CD14-positive monocyte (primary cell): ENCODE measurements at regions of chr5 and their contacts with region 1.

Region 1: GRCh38 chr5:178130604-178131485 is at the start of gene RMND5B:
- DNase-seq: peak; percentile 67 to 78 (median 76)
- H3K4me3 ChIP-seq: peak within 1 kb of the TSS; percentile 88 to 97 (median 92)
- H3K4me3 Mint-ChIP-seq: peak within 1 kb of the TSS; percentile 89 to 94
- H3K27ac ChIP-seq: peak within 1 kb of the TSS; percentile 16 to 67
- H3K27ac Mint-ChIP-seq: peak within 1 kb of the TSS in 5 of 7 donors; percentile 41 to 60 (median 54)
- H3K4me1 ChIP-seq: peaks cover 13 to 20% of the 10 kb centered on the region in 2 donors
- H3K4me1 Mint-ChIP-seq: peaks cover 21% of the 10 kb centered on the region
- H3K27me3 ChIP-seq: peaks cover 0 to 5% of the 10 kb centered on the region in 2 donors
- H3K27me3 Mint-ChIP-seq: peaks cover 6 to 28% (median 13%) of the 10 kb centered on the region in 3 donors
- CTCF ChIP-seq: no peak
- polyA plus RNA-seq, gene RMND5B: 20.9 to 27.4 (median 23.9) TPM

Region 2: DNA sequence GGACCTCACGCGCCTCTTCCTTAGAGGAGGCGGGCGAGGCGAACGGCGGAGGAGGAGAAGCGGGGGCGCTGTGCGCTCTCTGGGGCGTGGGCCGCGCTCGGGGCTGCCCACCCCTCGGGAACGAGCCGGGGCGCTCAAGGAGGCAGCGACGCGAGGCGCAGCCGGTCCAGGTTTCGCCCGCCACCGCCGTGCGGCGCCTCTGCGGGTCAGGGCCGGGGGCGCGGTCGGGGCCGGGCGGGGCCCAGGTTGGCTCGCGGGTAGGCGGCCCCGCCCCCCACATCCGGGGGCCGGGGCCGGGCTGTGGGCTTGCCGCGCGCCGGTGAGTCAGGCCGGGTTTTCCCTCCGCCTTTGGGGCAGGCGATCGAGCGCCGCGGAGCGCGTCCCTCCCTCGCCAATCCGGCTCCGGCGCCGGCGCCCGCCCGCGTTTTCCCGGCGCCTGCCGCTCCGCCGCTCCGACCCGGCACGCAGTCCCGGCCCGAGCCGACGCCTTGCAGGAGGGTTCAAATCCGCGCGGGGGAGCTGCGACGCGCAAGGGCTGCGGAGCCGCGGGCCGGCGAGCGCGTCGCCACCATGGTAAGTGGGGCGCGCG is 17.6 kb before region 1 on chr5 and contains the start of gene N4BP3:
- intact Hi-C with region 1: no loop called
- DNase-seq: peak; percentile 35 to 69 (median 41)
- H3K4me3 ChIP-seq: peak within 1 kb of the TSS in 1 of 3 experiments; percentile 42
- H3K4me3 Mint-ChIP-seq: peak within 1 kb of the TSS; percentile 61 to 86
- H3K27ac ChIP-seq: no peak within 1 kb of the TSS
- H3K27ac Mint-ChIP-seq: peak within 1 kb of the TSS in 3 of 7 donors; percentile 6 to 55 (median 45)
- H3K4me1 ChIP-seq: peaks cover 14 to 29% of the 10 kb centered on the region in 2 donors
- H3K4me1 Mint-ChIP-seq: peaks cover 32% of the 10 kb centered on the region
- H3K27me3 ChIP-seq: peaks cover 48 to 83% of the 10 kb centered on the region in 2 donors
- H3K27me3 Mint-ChIP-seq: peaks cover 72 to 88% (median 77%) of the 10 kb centered on the region in 3 donors
- CTCF ChIP-seq: no peak
- polyA plus RNA-seq, gene N4BP3: 0.01 TPM in 1 of 3 donors, not detected in the others

Region 3: DNA sequence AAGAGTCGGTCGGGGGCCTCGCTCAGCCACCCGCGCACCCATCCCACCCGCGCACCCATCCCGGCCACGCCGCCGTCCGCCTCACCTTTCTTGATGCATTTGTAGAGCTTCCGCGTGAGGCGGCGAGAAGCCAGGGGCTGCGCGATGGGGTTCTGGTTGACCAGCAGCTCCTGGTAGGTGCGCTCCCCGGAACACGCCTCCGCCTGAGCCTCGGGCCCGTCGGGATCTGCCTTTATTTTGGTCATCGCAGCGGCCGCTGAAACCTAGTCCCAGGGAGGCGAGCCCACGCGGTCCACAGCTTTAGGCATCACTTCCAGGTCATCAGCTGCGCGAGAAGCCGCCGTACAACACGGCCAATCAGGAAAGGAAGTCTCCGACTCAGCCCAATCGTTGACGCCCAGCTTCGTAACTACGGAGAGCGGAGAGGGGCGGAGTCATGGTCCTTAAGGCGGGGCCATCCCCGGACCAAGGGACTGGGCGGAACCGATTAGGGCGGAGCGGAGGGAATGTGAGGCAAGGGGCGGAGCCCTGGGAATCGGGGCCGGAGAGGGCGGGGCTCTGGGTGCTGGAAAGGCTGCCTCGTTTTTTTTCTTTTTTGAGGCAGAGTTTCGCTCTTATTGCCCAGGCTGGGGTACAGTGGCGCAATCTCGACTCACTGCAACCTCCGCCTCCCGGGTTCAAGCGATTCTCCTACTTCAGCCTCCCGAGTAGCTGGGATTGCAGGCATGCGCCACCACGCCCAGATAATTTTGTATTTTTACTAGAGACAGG is 22.9 kb after region 1 on chr5 and contains the start of gene NHP2:
- intact Hi-C with region 1: loop called in 1 of 2 experiments (anchors 2 kb)
- DNase-seq: peak; percentile 98 to 99 (median 99)
- H3K4me3 ChIP-seq: peak within 1 kb of the TSS; percentile 40 to 79 (median 64)
- H3K4me3 Mint-ChIP-seq: peak within 1 kb of the TSS; percentile 86 to 92
- H3K27ac ChIP-seq: peak within 1 kb of the TSS; percentile 33 to 77
- H3K27ac Mint-ChIP-seq: peak within 1 kb of the TSS; percentile 65 to 91 (median 89)
- H3K4me1 ChIP-seq: peaks cover 9 to 17% of the 10 kb centered on the region in 2 donors
- H3K4me1 Mint-ChIP-seq: peaks cover 17% of the 10 kb centered on the region
- H3K27me3 ChIP-seq: no peaks in the 10 kb centered on the region
- H3K27me3 Mint-ChIP-seq: no peaks in the 10 kb centered on the region
- CTCF ChIP-seq: no peak
- polyA plus RNA-seq, gene NHP2: 68.9 to 139 (median 108) TPM

Region 4: DNA sequence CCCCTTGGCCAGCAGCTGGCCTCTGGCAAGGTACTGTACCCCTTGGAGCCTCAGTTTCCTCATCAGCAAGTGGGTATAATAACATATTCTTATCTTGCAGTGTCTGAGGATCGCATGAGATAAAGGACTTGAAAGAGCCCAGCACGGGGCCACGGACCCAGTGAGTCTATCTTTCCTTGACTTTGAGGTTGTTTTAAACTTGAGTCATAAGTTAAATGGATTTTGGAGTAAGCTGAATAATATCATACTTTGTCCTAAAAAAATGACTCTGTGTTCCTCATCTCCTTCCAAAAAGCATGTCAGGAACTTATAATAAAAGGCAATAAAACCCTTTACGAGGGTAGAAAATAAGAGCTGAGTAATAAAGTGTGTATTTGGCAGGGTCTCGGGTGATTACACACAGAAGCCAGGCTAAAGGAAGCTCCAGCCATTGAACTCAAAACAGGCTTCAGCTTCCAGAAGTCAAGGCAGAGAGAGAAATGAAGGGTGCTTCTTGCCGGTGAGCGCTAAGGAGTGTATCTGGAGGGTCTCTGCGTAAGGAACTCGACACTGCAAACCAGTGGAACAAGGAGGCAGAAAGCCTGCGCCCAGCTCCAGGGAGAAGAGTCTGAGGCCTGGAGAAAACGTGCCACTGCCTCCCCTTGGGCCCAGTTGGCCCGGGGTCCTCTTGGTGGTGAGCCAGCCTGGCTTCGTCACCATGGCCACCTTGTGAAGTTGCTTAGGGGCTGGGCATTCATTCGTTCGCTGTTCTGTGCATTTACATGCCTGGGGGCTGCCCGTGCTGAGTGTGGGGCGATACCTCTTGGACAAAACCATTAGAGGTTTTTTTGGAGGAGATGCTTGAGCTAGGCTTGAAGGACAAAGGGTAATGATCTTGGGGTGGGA is 174.2 kb after region 1 on chr5:
- intact Hi-C with region 1: no loop called
- DNase-seq: no peak
- H3K4me3 ChIP-seq: no peak overlapping the region
- H3K4me3 Mint-ChIP-seq: no peak overlapping the region
- H3K27ac ChIP-seq: no peak overlapping the region
- H3K27ac Mint-ChIP-seq: no peak overlapping the region
- H3K4me1 ChIP-seq: no peaks in the 10 kb centered on the region
- H3K4me1 Mint-ChIP-seq: no peaks in the 10 kb centered on the region
- H3K27me3 ChIP-seq: no peaks in the 10 kb centered on the region
- H3K27me3 Mint-ChIP-seq: peaks cover 0 to 2% (median 1%) of the 10 kb centered on the region in 3 donors
- CTCF ChIP-seq: no peak